ENCODE measurements at regions of chr15 and their contacts with region 1.

Region 1: GRCh38 chr15:28977377-28978013 is 91.7 kb downstream of the APBA2 start:
- DNase-seq: no peak

Region 2: DNA sequence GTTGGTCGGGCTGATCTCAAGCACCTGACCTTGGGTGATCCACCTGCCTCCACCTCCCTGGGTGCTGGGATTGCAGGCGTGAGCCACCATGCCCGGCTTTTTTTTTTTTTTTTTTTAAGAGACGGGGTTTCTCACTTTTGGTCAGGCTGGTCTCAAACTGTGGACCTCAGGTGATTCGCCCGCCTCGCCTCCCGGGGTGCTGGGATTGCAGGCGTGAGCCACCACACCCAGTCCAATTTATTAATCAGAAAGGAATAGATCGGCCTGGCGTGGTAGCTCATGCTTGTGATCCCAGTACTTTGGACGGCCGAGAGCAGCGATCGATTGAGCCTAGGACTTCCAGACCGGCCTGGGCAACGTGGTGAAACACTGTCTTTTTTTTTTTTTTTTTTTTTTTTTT is 251.4 kb before region 1 on chr15:
- intact Hi-C with region 1: no loop called
- DNase-seq: no peak

Region 3: GRCh38 chr15:28993051-28993719 is 15.7 kb after region 1 on chr15:
- intact Hi-C with region 1: loop called (anchors 1 kb)
- DNase-seq: no peak

Region 4: DNA sequence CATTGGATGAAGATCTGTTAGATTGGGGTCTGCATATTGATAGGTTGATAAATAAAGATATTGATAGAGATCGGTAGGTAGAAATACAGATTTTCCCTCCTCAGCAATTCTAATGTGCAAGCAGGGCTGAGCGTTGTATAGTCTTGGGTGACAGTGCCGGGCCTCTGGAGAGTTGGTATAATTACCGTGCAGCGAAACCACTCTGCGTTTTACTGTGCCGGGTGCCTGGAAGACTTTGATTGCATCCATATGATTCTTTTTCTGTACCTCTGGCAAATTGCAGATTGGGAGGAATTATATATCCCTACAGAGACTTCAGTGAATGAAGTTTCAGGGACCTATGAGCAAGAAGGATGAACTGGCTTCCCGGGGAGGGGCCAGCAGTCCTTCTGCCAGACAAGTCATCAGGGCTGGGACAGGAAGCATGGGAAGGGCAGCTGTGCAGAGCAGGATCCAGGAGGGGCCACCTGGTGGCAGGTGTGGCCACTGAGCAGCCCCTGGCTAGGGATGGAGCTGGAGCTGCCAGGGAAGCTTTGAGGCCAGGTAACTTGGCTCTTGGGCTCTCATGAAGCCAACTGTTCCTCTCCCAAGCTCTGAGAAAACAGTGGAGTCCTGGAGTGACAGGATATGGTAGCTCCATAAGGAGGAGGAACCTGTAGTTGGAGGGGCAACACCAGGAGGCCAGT is 40.8 kb after region 1 on chr15:
- intact Hi-C with region 1: no loop called
- DNase-seq: no peak

Region 5: GRCh38 chr15:29170521-29170920 is 193.0 kb after region 1 on chr15:
- intact Hi-C with region 1: no loop called
- DNase-seq: no peak

Measured in cardiac septum (tissue), 1 donor.